ENCODE measurements at regions of chr15 and their contacts with region 1.

Region 1: DNA sequence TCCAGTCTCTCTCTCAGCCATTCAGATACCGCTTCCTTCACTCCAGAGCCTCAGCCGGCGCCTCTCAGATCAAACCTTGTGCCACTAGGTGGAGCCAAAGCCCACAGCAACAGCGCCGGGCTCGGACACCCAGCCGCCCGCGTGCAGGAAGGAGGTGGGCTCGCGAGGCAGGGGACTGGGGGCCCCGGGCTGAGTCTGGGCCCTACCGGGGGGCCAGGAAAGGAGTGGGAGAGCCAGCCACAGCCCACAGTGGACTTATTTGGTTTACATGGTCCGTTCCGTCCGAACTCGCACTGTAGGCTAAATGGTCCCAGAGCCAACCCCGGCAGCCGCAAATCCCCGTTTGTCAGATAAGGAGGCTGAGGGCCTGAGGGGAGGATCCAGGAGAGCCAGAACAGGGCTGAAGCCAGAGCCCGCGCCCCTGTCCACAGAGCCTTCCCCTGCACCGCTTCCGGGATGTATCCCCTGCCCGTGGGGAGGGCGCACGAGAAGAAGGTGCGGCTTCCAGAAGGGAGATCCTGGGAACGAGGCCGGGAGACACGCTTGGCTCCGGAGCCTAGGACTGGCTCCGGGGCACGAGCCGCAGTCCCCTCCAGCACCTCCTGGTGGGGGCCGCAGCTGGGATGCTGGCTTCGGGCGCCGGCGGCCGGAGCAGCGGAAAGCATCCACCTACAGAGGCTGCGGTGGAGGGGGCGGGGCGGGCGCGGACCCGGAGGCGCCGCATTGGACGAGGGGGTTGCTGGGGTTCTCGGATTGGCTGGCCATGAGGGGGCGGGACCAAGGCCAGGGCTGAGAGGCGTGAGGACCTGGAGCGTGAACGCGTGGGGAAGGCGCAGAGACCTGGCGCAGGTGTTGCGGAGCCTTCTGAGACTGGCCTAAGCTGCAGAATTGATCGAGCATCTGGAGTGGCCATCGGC is 6.5 kb upstream of the CYP11A1 start:
- DNase-seq: peak; percentile 98
- H3K4me3 Mint-ChIP-seq: peak overlapping the region; percentile 81
- H3K27ac Mint-ChIP-seq: no peak overlapping the region
- H3K4me1 Mint-ChIP-seq: peaks cover 20% of the 10 kb centered on the region
- H3K27me3 Mint-ChIP-seq: peaks cover 46% of the 10 kb centered on the region
- CTCF ChIP-seq: peak; percentile 88

Region 2: GRCh38 chr15:74062671-74063070 is 311.3 kb before region 1 on chr15:
- CTCF ChIA-PET with region 1: no interaction called
- intact Hi-C with region 1: no loop called
- DNase-seq: no peak
- H3K4me3 Mint-ChIP-seq: no peak overlapping the region
- H3K27ac Mint-ChIP-seq: no peak overlapping the region
- H3K4me1 Mint-ChIP-seq: peaks cover 11% of the 10 kb centered on the region
- H3K27me3 Mint-ChIP-seq: peaks cover 39% of the 10 kb centered on the region
- CTCF ChIP-seq: no peak

Region 3: GRCh38 chr15:74438721-74439316 is 64.8 kb after region 1 on chr15:
- CTCF ChIA-PET with region 1: interaction called, 7 read pairs
- intact Hi-C with region 1: loop called (anchors 2 kb)
- DNase-seq: peak; percentile 87
- H3K4me3 Mint-ChIP-seq: no peak overlapping the region
- H3K27ac Mint-ChIP-seq: peak overlapping the region; percentile 58
- H3K4me1 Mint-ChIP-seq: peaks cover 16% of the 10 kb centered on the region
- H3K27me3 Mint-ChIP-seq: no peaks in the 10 kb centered on the region
- CTCF ChIP-seq: peak; percentile 91

Region 4: GRCh38 chr15:74489518-74490338 is 115.7 kb after region 1 on chr15:
- CTCF ChIA-PET with region 1: interaction called, 3 read pairs
- intact Hi-C with region 1: loop called (anchors 2 kb)
- DNase-seq: peak; percentile 76
- H3K4me3 Mint-ChIP-seq: no peak overlapping the region
- H3K27ac Mint-ChIP-seq: no peak overlapping the region
- H3K4me1 Mint-ChIP-seq: peaks cover 10% of the 10 kb centered on the region
- H3K27me3 Mint-ChIP-seq: no peaks in the 10 kb centered on the region
- CTCF ChIP-seq: peak; percentile 67

Region 5: GRCh38 chr15:74540761-74541493 is 166.9 kb after region 1 on chr15 and contains the start of gene ARID3B:
- CTCF ChIA-PET with region 1: interaction called, 4 read pairs
- intact Hi-C with region 1: loop called (anchors 10 kb)
- DNase-seq: peak; percentile 96
- H3K4me3 Mint-ChIP-seq: peak within 1 kb of the TSS; percentile 77
- H3K27ac Mint-ChIP-seq: peak within 1 kb of the TSS; percentile 62
- H3K4me1 Mint-ChIP-seq: peaks cover 39% of the 10 kb centered on the region
- H3K27me3 Mint-ChIP-seq: peaks cover 26% of the 10 kb centered on the region
- CTCF ChIP-seq: no peak
- total RNA-seq, gene ARID3B: 10.6 and 11.2 TPM in 2 replicates

Region 6: DNA sequence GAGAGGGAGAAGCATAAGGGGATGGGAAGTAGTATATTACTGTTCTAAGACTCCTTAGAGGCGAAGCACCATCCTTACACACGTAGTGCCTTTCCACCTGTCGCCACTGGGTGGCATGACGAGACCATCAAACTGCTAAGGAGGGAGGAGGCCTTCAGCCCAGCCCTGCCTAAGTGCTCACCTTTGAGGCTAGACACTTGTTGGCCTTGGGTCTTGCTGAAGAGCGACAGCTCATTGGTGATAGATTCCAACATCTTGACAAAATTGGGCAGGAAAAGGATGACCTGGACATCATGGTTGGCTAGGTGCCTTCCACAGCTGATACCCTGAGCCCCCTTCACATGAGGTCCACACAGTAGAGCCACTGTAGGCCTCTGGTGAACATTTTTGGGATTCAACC is 261.2 kb after region 1 on chr15:
- CTCF ChIA-PET with region 1: interaction called, 5 read pairs
- intact Hi-C with region 1: loop called (anchors 1 kb)
- DNase-seq: peak; percentile 81
- H3K4me3 Mint-ChIP-seq: no peak overlapping the region
- H3K27ac Mint-ChIP-seq: no peak overlapping the region
- H3K4me1 Mint-ChIP-seq: no peaks in the 10 kb centered on the region
- H3K27me3 Mint-ChIP-seq: no peaks in the 10 kb centered on the region
- CTCF ChIP-seq: peak; percentile 94

Region 7: DNA sequence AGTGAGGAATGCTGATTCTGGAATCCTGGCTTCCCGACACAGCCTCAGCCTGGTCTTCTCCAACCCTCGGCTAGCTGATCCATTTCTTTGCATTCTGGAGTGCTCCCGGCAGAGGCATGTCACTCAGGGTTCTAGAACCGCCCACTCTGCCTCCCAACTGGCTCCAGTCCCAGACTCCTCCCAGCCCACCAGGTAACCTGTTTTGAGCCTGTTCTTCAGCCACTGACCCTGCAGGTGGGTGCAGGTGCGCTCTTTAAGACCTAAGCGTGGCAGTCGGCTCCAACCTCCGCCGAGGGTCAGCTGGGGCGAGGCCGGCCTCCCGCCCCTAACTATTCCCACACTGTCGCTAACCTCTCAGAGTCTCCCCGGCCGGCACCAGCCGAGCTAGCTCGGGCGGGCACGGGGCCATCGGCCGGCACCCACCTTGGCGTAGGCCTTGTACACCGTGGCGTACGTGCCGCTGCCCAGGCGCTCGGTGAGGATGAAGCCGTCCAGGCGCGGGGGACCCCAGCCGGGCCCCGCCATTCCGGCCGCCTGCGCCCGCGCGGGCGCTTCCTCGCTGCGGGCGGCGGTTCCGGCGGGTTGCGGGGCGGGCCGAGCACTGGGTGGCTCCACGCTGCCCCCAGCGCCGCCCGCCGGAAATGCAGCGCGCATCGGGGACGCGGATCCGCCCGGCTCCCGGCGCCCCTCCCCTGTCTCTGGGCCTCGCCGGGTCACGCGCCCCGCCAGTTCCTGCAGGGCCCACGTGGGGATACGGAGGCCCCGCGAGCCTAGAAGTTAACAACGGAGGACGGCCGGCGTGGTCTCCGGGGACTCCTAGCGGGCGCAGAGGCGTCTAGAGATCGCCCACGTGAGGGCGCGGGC is 468.8 kb after region 1 on chr15 and contains the start of gene ULK3:
- CTCF ChIA-PET with region 1: no interaction called
- intact Hi-C with region 1: no loop called
- DNase-seq: peak; percentile 96
- H3K4me3 Mint-ChIP-seq: peak within 1 kb of the TSS; percentile 80
- H3K27ac Mint-ChIP-seq: peak within 1 kb of the TSS; percentile 52
- H3K4me1 Mint-ChIP-seq: no peaks in the 10 kb centered on the region
- H3K27me3 Mint-ChIP-seq: no peaks in the 10 kb centered on the region
- CTCF ChIP-seq: peak; percentile 88
- total RNA-seq, gene ULK3: 33.8 and 42.2 TPM in 2 replicates

Measured in Calu3 (cell line).